HCT116 (cell line): ENCODE measurements at regions of chr1 and their contacts with region 1.

Region 1: DNA sequence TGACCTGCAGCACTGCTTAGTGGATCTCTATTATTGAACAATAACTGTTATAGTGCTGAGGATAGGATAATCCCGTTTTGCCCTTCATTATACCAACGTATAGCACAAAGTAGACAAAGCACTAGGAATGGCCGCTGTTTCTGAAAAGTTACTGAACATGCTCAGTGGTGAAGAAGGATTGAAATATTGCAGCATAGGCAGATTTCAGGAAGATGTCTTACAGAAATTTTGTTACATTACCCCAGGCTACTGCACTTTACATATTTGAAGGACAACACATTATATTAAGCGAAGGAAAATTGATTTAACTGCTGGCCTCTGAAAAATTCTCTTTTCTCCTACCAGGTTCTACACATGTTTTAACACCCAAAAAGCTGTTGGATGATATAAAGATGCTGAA is 48.5 kb downstream of the AKNAD1 start:
- DNase-seq: no peak
- ATAC-seq: no peak
- H3K4me3 ChIP-seq: no peak overlapping the region
- H3K27ac ChIP-seq: no peak overlapping the region
- H3K4me1 ChIP-seq: no peaks in the 10 kb centered on the region
- H3K27me3 ChIP-seq: no peaks in the 10 kb centered on the region
- CTCF ChIP-seq: no peak
- POLR2A ChIP-seq: no peak
- RAD21 ChIP-seq: no peak

Region 2: DNA sequence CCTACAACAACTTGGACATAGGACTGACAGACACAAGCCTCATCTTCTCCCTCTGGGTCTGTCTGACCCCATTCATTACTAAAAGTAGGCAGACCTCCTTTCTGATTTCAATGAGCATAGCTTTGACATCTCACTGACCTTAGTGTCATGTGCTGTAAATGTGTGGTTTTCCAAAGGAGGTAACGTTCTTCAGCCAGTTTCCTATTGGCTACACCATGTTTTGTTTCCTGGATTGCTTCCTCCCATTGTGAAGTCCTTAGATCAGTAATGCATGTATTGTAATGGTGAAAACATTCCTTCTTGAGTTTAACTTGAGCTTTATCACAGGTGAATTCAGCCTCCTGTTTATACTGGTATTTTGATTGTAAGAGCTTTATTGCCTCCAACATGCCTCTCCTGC is 41.3 kb before region 1 on chr1:
- CTCF ChIA-PET with region 1: no interaction called
- POLR2A ChIA-PET with region 1: no interaction called
- RAD21 ChIA-PET with region 1: no interaction called
- intact Hi-C with region 1: loop called (anchors 5 kb)
- DNase-seq: no peak
- ATAC-seq: no peak
- H3K4me3 ChIP-seq: no peak overlapping the region
- H3K27ac ChIP-seq: no peak overlapping the region
- H3K4me1 ChIP-seq: no peaks in the 10 kb centered on the region
- H3K27me3 ChIP-seq: no peaks in the 10 kb centered on the region
- CTCF ChIP-seq: no peak
- POLR2A ChIP-seq: no peak
- RAD21 ChIP-seq: no peak

Region 3: DNA sequence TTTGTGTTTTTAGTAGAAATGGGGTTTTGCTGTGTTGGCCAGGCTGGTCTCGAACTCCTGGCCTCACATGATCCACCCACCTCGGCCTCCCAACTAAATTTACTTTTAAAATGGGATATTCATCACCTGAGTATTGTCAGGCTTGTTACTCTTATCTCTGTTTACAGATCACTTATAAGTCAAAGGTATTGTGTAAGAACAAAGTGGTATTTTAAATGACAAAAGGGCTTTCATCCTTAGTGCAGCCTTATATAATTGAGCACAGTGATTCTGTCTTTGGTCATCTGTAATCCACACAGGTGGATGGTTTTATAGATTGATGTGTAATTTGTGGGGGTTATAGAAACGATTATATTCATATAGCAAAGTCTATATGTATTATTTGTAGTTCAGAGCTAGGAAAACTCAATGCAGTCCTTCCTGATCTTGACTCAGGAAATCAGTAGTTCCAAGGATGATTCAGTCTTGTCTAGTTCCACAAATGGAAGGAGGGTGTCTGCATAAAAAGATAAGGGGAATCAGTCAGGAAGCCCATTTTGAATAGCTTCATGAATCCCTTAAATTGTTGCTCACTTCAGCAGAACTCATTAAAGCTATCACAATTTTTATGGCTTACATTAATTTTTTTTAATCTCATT is 27.4 kb before region 1 on chr1:
- CTCF ChIA-PET with region 1: no interaction called
- POLR2A ChIA-PET with region 1: no interaction called
- RAD21 ChIA-PET with region 1: no interaction called
- intact Hi-C with region 1: no loop called
- DNase-seq: no peak
- ATAC-seq: no peak
- H3K4me3 ChIP-seq: no peak overlapping the region
- H3K27ac ChIP-seq: no peak overlapping the region
- H3K4me1 ChIP-seq: no peaks in the 10 kb centered on the region
- H3K27me3 ChIP-seq: no peaks in the 10 kb centered on the region
- CTCF ChIP-seq: no peak
- POLR2A ChIP-seq: no peak
- RAD21 ChIP-seq: no peak

Region 4: GRCh38 chr1:109239580-109240095 is 431.2 kb after region 1 on chr1:
- CTCF ChIA-PET with region 1: no interaction called
- POLR2A ChIA-PET with region 1: no interaction called
- RAD21 ChIA-PET with region 1: no interaction called
- intact Hi-C with region 1: no loop called
- DNase-seq: no peak
- ATAC-seq: peak; percentile 87
- H3K4me3 ChIP-seq: no peak overlapping the region
- H3K27ac ChIP-seq: no peak overlapping the region
- H3K4me1 ChIP-seq: peaks cover 6 to 18% of the 10 kb centered on the region in 2 experiments; a peak in 2 of 4 replicates
- H3K27me3 ChIP-seq: no peaks in the 10 kb centered on the region
- CTCF ChIP-seq: peak; percentile 37 to 74 (median 64); a peak in 5 of 6 replicates
- POLR2A ChIP-seq: no peak
- RAD21 ChIP-seq: no peak